ENCODE measurements at regions of chr17 and their contacts with region 1.

Region 1: GRCh38 chr17:68981288-68981687 is 26.1 kb upstream of the ABCA8 start:
- DNase-seq: no peak

Region 2: GRCh38 chr17:69060822-69061221 is 79.5 kb after region 1 on chr17 and contains the start of gene ABCA9:
- intact Hi-C with region 1: loop called (anchors 10 kb)
- DNase-seq: no peak